ENCODE measurements at regions of chr1 and their contacts with region 1.

Region 1: DNA sequence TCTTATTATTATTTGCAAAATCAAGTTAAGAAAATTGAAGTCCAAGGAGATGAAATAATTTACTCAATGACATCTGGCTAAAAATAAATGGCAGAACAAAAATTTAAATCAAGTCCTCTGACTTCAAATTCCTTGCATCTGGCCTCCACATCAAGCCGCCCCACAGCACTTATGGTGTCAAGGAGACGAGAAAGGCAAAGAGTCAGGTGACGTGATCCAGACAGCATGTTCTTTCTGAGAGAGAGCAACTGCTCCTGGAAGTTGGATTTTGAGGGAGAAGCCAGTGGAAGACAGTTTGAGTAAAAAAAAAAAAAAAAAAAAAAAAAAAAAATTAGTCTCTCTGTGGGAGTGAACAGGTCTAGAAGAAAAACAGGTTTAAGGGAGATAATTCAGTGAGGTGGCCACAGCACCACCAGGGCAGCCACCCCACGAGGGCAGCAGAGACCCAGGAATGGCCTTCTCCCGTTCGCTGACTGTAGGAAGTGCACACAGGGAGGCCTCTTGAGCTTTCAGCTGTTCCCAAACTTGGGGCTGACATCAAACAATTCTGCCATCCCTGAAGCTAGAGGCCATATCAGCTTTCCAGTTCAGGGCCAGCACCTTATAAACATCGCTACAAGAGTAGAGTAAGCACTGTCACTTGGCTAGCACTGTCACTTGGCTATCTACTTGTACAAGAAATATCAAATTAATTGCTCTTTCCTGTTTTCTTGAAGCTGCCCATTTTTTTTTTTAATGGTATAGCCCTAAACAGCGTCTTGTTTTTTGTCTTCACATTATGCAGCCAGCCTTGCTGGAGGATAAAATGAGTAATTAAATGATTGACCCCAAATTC is 7.8 kb downstream of the C1orf162 start:
- DNase-seq: peak; percentile 48
- ATAC-seq: peak; percentile 88
- H3K4me3 ChIP-seq: no peak overlapping the region
- H3K27ac ChIP-seq: no peak overlapping the region
- H3K4me1 ChIP-seq: peaks cover 16% of the 10 kb centered on the region
- H3K27me3 ChIP-seq: no peaks in the 10 kb centered on the region
- CTCF ChIP-seq: peak; percentile 79 to 97 (median 83)
- EP300 ChIP-seq: no peak
- POLR2A ChIP-seq: no peak
- RAD21 ChIP-seq: peak; percentile 95

Region 2: DNA sequence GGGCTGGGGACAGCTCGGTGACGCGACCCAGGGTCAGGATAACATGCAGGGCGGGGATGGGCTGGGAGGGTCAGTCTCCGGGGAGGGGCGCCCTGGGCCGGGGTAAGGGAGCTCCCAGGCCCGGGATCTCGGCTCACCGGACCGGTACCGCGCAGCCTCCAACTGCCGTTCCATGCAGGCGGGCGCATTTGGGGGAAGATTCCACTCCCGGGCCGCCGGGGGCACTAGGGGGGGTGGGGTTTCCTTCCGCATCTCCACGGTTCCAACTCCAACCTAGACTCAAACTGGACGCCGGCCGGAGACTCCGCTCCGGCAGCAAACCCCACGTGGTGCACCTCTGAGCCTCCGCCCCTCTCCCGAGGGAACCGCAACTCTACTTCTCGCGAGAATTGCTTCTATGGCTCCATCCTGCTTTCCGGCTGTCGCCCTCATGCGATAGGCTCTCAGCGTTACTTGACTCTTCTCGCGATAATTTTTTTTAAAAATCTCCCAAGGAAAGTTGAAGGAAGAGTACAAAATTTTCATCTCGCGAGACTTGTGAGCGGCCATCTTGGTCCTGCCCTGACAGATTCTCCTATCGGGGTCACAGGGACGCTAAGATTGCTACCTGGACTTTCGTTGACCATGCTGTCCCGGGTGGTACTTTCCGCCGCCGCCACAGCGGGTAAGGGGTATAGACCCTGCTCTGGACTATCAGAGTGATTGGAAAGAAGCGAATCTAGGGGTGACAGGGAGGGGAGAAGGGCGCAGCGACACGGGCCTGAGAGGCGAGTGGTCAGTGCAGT is 32.5 kb before region 1 on chr1 and contains the starts of genes ATP5PB and WDR77:
- CTCF ChIA-PET with region 1: interaction called, 14 read pairs
- POLR2A ChIA-PET with region 1: interaction called, 3 read pairs
- RAD21 ChIA-PET with region 1: interaction called, 16 read pairs
- SMC1A ChIA-PET with region 1: interaction called, 20 read pairs
- in situ Hi-C with region 1: no loop called
- intact Hi-C with region 1: no loop called
- DNase-seq: peak; percentile 98
- ATAC-seq: peak; percentile 91
- H3K4me3 ChIP-seq: peak within 1 kb of the TSS; percentile 98
- H3K27ac ChIP-seq: peak within 1 kb of the TSS; percentile 95
- H3K4me1 ChIP-seq: peaks cover 24% of the 10 kb centered on the region
- H3K27me3 ChIP-seq: no peaks in the 10 kb centered on the region
- CTCF ChIP-seq: no peak
- EP300 ChIP-seq: no peak
- POLR2A ChIP-seq: peak; percentile 79
- RAD21 ChIP-seq: no peak
- polyA plus RNA-seq, gene ATP5PB: 1,250 to 1,760 TPM
- polyA plus RNA-seq, gene WDR77: 12.7 to 34.1 TPM

Region 3: DNA sequence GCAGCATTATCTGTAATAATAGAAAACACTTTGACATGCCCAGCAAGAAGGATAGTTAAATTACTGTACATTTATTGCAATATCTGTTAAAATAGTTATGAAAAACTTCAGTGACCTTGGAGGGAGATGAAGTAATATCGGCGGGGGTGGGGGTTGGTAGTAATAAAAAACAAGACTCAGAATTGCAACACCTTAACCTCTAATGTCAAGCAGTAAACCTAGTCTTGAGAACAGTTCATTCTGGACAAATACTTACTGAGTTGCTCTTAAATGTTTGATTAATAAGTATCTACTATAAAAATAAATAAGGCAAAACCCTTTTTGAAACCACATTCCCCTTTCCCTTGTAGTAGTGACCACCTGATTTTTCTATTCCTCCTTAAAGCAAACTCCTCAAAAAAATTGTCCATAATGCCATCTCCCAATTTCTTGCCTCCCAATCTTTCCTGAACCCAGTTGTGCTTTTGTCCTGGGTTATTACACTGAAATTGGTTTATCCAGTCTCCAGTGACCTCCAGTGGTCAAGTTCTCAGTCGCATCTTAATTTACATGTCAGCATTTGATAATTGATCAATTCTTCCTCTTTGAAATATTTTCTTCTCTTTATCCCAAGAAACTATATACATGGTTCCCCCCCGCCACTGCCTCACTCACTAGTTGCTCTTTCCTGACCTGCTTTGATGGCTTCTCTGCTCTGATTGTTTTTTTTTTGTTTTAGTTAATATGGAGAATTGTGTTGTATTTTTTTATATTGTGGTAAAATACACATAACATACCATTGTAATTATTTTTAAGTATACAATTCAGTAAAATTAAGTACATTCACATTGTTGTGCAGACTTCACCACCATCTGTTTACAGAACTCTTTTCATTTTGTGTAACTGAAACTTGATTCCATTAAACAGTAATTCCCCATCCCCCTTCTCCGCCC is 174.7 kb after region 1 on chr1:
- CTCF ChIA-PET with region 1: interaction called, 8 read pairs
- POLR2A ChIA-PET with region 1: no interaction called
- RAD21 ChIA-PET with region 1: interaction called, 3 read pairs
- SMC1A ChIA-PET with region 1: interaction called, 3 read pairs
- in situ Hi-C with region 1: no loop called
- intact Hi-C with region 1: loop called (anchors 2 kb)
- DNase-seq: no peak
- ATAC-seq: no peak
- H3K4me3 ChIP-seq: no peak overlapping the region
- H3K27ac ChIP-seq: no peak overlapping the region
- H3K4me1 ChIP-seq: peaks cover 21% of the 10 kb centered on the region
- H3K27me3 ChIP-seq: no peaks in the 10 kb centered on the region
- CTCF ChIP-seq: peak; percentile 28 to 54 (median 52); a peak in 5 of 6 replicates
- EP300 ChIP-seq: no peak
- POLR2A ChIP-seq: no peak
- RAD21 ChIP-seq: peak; percentile 83

Region 4: DNA sequence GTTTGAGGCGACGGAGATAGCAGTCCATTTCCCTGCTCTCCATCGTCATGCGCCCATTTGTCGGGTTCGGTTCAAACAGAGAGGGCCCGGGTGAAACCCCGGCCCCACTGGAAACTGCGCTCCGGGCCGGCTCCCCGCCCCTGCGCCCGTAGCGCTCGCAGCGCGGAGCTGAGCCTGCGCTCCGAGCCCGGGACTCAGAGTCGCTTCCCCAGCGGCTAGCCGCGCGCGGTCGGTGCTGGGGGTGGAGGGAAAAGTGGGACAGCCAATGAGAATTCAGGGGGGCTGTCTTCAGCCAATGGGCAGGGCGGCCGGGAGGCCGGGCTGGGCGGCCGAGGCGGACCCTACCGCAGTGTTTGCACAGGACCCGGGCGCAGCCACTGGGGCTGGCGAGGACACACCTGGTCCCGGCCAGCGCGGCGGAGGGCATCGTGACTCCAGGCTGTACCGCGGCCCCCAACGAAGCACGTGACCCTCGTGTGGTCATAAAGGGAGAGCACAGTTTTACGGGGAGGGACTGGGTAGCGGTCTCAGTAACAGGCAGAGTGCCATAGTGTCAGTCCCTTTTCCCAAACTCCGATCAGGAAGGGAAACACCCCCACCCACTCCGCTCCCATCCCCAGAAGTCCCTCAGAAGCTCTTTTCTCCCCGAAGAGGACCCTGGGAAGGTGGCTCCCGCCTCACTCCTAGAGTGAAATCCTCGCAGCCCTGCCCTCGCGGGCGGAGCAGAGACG is 257.8 kb after region 1 on chr1 and contains the start of gene INKA2:
- CTCF ChIA-PET with region 1: interaction called, 46 read pairs
- POLR2A ChIA-PET with region 1: interaction called, 3 read pairs
- RAD21 ChIA-PET with region 1: interaction called, 5 read pairs
- SMC1A ChIA-PET with region 1: interaction called, 8 read pairs
- in situ Hi-C with region 1: no loop called
- intact Hi-C with region 1: no loop called
- DNase-seq: peak; percentile 47
- ATAC-seq: peak; percentile 90
- H3K4me3 ChIP-seq: peak within 1 kb of the TSS; percentile 86
- H3K27ac ChIP-seq: peak within 1 kb of the TSS; percentile 45
- H3K4me1 ChIP-seq: peaks cover 11% of the 10 kb centered on the region
- H3K27me3 ChIP-seq: peaks cover 0 to 8% of the 10 kb centered on the region in 2 experiments; a peak in 2 of 4 replicates
- CTCF ChIP-seq: peak in 1 of 3 experiments; percentile 11; a peak in 1 of 6 replicates
- EP300 ChIP-seq: no peak
- POLR2A ChIP-seq: peak; percentile 41; the same call in 1 of the 2 replicates
- RAD21 ChIP-seq: no peak
- polyA plus RNA-seq, gene INKA2: 0.38 TPM in 1 of 2 experiments, not detected in the other

Region 5: GRCh38 chr1:111769517-111770146 is 288.0 kb after region 1 on chr1:
- CTCF ChIA-PET with region 1: interaction called, 119 read pairs
- POLR2A ChIA-PET with region 1: no interaction called
- RAD21 ChIA-PET with region 1: interaction called, 21 read pairs
- SMC1A ChIA-PET with region 1: interaction called, 101 read pairs
- in situ Hi-C with region 1: no loop called
- intact Hi-C with region 1: loop called (anchors 1 kb)
- DNase-seq: peak; percentile 44
- ATAC-seq: peak; percentile 79
- H3K4me3 ChIP-seq: no peak overlapping the region
- H3K27ac ChIP-seq: no peak overlapping the region
- H3K4me1 ChIP-seq: no peaks in the 10 kb centered on the region
- H3K27me3 ChIP-seq: no peaks in the 10 kb centered on the region
- CTCF ChIP-seq: peak; percentile 66 to 87 (median 78)
- EP300 ChIP-seq: no peak
- POLR2A ChIP-seq: no peak
- RAD21 ChIP-seq: peak; percentile 92

Region 6: DNA sequence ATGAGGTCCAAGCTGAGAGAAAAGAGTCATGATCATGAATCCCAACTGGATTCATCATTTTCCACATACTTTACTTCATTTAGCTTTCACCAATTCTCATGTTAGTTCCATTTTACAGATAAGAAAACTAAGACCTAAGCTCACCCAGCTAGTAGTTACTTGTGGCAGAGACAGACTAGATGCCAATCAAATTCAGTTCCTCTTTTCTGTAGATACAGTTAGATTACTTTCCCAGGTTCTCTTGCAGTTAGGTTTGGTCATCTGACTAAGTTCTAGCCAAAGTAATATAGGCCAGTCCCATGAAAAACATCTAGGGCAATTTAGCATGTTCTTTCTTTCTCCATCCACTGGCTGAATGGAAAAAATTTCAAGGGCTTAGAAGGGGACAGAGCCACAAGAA is 516.7 kb after region 1 on chr1:
- CTCF ChIA-PET with region 1: no interaction called
- POLR2A ChIA-PET with region 1: no interaction called
- RAD21 ChIA-PET with region 1: no interaction called
- SMC1A ChIA-PET with region 1: no interaction called
- in situ Hi-C with region 1: no loop called
- intact Hi-C with region 1: no loop called
- DNase-seq: no peak
- ATAC-seq: no peak
- H3K4me3 ChIP-seq: no peak overlapping the region
- H3K27ac ChIP-seq: no peak overlapping the region
- H3K4me1 ChIP-seq: no peaks in the 10 kb centered on the region
- H3K27me3 ChIP-seq: peaks cover 2 to 4% of the 10 kb centered on the region in 2 experiments; a peak in 3 of 4 replicates
- CTCF ChIP-seq: no peak
- EP300 ChIP-seq: no peak
- POLR2A ChIP-seq: no peak
- RAD21 ChIP-seq: no peak

Measured in GM12878 (cell line).